Dendritic cell treated with granulocyte-macrophage colony-stimulating factor and Interleukin-4, amounts not matched to agents 40 ng/mL and 50 ng/mL, for 4 days (primary cell): ENCODE measurements at regions of chr19 and their contacts with region 1.

Region 1: DNA sequence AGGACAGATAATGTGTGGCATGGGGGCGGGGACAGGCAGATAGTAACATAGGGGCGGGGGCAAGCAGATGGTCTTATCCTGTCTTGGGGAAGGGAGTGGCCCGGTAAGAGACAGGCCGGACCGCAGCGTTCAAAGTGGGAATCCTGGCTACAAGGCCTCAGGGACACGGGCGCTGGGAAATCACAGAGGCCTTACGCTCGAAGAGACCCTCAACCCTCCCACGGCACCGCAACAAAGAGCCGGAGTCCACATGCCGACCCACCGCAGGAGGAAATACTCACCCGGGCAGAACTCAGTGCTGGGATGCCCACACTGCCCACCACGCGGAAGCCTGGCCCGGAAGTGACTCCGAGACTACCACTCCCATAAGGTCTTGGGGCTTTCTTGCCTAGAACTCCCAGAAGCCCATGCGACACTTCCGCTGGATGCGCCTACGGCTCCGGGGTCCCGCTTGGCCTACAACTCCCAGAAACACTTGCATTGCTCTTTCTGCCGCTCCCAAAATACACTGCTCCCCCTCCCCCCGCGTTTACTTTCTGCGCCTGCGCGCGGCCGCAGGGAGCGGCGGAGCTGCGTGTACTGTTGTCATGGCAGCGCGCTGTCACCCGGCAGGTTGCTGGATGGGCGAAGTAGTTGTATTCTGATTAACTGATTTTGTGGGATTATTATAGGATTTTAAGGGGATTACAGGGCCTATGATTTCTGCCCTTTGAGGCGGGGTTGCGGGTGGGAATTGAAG is at the start of gene CTU1:
- H3K4me3 Mint-ChIP-seq: peak within 1 kb of the TSS; percentile 87
- H3K27ac Mint-ChIP-seq: peak within 1 kb of the TSS; percentile 88
- H3K4me1 Mint-ChIP-seq: peaks cover 33% of the 10 kb centered on the region
- H3K27me3 Mint-ChIP-seq: no peaks in the 10 kb centered on the region

Region 2: GRCh38 chr19:51123381-51123800 is 15.2 kb after region 1 on chr19:
- intact Hi-C with region 1: loop called (anchors 2 kb)
- H3K4me3 Mint-ChIP-seq: peak overlapping the region; percentile 88
- H3K27ac Mint-ChIP-seq: peak overlapping the region; percentile 97
- H3K4me1 Mint-ChIP-seq: peaks cover 99% of the 10 kb centered on the region
- H3K27me3 Mint-ChIP-seq: no peaks in the 10 kb centered on the region

Region 3: DNA sequence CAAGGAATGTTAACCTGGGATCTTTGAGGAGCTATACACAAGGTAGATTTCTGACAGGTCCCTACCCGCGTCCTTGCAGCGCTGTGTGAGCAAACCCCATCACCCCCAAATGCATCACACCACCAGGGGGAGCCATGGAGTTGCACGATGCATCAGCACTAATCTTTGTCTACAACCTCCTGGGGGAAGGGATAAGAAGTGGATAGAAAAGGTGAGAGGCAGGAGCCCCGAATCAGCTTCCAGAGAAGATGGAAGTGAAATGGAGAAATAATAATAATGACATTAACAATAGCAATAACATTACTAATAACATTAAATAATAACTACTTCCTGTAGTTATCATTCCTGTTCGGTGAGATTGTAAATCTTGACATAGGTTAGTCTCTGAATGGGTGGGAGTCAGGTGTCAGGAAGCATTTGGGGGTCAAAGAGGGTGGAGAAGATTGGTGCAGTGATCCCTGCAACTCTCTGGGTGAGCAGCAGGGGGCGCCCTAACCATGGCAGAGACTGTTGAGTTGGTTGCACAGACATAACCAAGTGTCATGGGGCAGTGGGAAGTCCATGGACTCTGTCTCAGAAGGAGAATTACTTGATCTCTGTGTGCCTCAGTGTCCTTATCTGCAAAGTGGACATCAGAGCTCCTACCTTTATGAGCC is 50.4 kb after region 1 on chr19:
- intact Hi-C with region 1: no loop called
- H3K4me3 Mint-ChIP-seq: no peak overlapping the region
- H3K27ac Mint-ChIP-seq: peak overlapping the region; percentile 67
- H3K4me1 Mint-ChIP-seq: peaks cover 23% of the 10 kb centered on the region
- H3K27me3 Mint-ChIP-seq: no peaks in the 10 kb centered on the region

Region 4: GRCh38 chr19:51181913-51182419 is 73.7 kb after region 1 on chr19:
- intact Hi-C with region 1: no loop called
- H3K4me3 Mint-ChIP-seq: peak overlapping the region; percentile 13
- H3K27ac Mint-ChIP-seq: no peak overlapping the region
- H3K4me1 Mint-ChIP-seq: peaks cover 40% of the 10 kb centered on the region
- H3K27me3 Mint-ChIP-seq: peaks cover 37% of the 10 kb centered on the region